Tibial artery (tissue), 4 donors: ENCODE measurements at regions of chr2 and their contacts with region 1.

Region 1: GRCh38 chr2:205680067-205680466 is 2.2 kb upstream of the NRP2 start:
- DNase-seq: no peak
- H3K4me3 ChIP-seq: no peak overlapping the region
- H3K27ac ChIP-seq: no peak overlapping the region
- H3K4me1 ChIP-seq: peaks cover 0 to 30% (median 18%) of the 10 kb centered on the region in 4 donors
- H3K27me3 ChIP-seq: peaks cover 0 to 15% of the 10 kb centered on the region in 2 donors
- CTCF ChIP-seq: peak; percentile 50 to 58

Region 2: DNA sequence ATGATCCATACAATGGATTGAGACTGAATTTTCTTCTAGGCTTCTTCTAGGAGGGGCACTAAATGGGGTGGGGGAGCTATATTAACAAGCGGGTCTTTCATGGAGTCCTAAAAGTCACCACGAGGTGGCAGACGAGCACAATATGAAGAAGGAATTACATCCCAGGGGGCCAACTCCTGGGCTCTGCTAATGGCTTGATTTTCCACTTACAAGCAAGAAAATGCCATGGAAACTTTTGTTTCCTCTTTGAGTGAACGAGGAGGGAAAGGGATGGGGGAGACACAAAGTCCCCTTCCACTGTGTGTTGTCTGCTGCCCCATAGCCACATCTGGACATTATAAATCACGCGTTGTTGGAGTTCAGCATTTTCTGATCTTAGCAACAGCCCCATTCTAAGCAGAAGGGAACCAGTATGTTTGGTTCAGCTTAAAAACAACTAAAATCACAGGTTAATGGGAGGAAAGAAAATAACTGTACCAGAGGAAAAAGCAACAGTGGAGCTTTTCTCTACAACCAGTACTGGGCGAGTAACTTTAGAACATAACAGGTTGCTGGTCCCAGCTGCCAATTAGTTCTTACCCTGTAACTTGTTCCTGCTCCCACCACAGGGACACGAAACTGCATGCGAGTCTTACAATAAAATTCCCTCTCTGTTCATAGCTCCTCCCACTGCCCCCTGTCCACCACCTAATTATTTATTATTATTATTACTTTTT is 1419.7 kb before region 1 on chr2:
- intact Hi-C with region 1: loop called (anchors 5 kb)
- DNase-seq: peak; percentile 71 to 78
- H3K4me3 ChIP-seq: no peak overlapping the region
- H3K27ac ChIP-seq: no peak overlapping the region
- H3K4me1 ChIP-seq: peaks cover 0 to 23% (median 14%) of the 10 kb centered on the region in 4 donors
- H3K27me3 ChIP-seq: no peaks in the 10 kb centered on the region
- CTCF ChIP-seq: peak; percentile 73 to 80

Region 3: GRCh38 chr2:204325468-204325867 is 1354.6 kb before region 1 on chr2:
- intact Hi-C with region 1: loop called (anchors 5 kb)
- DNase-seq: peak in 1 of 2 donors; percentile 49
- H3K4me3 ChIP-seq: no peak overlapping the region
- H3K27ac ChIP-seq: no peak overlapping the region
- H3K4me1 ChIP-seq: peaks cover 0 to 17% (median 3%) of the 10 kb centered on the region in 4 donors
- H3K27me3 ChIP-seq: no peaks in the 10 kb centered on the region
- CTCF ChIP-seq: peak; percentile 88

Region 4: DNA sequence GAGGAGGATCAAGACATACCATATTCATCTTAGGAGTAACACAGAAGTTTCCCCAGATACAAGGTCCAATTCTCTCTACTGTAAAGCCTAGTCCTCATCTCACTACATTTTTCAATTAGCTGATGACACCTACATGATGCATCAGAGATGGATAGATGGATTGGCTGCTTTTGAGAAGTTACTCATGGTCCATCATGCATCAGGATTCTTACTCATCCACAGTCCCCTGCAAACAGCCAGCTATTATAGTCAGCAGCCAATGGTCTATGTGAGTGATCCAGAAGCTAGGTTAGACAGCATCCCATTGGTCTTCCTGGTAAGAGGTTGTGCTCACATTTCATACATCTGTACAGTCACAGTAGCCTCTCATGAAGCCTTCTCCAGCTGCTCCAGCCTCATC is 152.3 kb before region 1 on chr2:
- intact Hi-C with region 1: no loop called
- DNase-seq: no peak
- H3K4me3 ChIP-seq: no peak overlapping the region
- H3K27ac ChIP-seq: no peak overlapping the region
- H3K4me1 ChIP-seq: no peaks in the 10 kb centered on the region
- H3K27me3 ChIP-seq: no peaks in the 10 kb centered on the region
- CTCF ChIP-seq: no peak

Region 5: GRCh38 chr2:206368933-206369569 is 689.0 kb after region 1 on chr2:
- intact Hi-C with region 1: no loop called
- DNase-seq: no peak
- H3K4me3 ChIP-seq: no peak overlapping the region
- H3K27ac ChIP-seq: no peak overlapping the region
- H3K4me1 ChIP-seq: peaks cover 0 to 19% (median 0%) of the 10 kb centered on the region in 4 donors
- H3K27me3 ChIP-seq: no peaks in the 10 kb centered on the region
- CTCF ChIP-seq: no peak